ENCODE measurements at regions of chr13 and their contacts with region 1.

Region 1: DNA sequence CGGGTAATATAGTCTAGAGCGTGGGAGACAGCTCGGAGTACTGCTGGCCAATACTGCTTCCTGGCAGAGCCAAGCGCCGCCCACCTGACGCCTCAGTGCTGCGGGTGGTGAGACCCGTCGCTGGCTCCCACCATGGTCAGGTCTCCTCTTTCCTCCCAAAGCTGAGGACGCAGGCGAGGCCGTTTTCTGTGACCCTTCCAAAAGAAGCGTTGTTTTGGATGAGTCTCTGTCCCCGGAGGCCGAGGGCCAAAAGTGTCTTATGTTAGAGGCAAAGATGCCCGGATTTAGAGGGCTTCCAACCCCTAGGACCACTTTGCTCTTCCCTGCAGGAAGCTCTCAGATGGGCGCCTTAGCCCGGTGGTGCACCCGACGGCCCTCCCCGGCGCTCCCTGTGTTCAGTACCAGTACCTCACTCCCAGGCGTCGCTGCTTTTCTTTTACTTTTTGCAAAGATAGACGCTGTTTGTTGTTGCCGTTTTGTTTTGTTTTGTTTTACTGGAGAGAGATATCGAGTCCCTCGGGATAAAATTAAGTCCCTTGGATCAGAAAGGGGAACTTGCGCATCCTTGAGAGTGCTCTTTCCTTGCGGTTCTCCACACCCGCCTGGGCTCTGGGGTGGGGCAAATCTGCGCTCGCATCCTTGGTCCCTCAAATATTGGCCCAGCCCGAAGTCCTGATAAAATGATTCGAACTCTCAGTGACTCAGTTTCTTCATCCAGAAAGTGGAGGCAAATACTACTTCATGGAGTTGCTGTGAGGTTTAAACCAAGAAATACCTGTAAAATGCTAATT is 7.0 kb downstream of the PDX1 start:
- DNase-seq: peak; percentile 33
- ATAC-seq: no peak
- H3K4me3 Mint-ChIP-seq: peak overlapping the region; percentile 7
- H3K27ac Mint-ChIP-seq: no peak overlapping the region
- H3K4me1 Mint-ChIP-seq: peaks cover 22% of the 10 kb centered on the region
- H3K27me3 Mint-ChIP-seq: peaks cover 84% of the 10 kb centered on the region

Region 2: DNA sequence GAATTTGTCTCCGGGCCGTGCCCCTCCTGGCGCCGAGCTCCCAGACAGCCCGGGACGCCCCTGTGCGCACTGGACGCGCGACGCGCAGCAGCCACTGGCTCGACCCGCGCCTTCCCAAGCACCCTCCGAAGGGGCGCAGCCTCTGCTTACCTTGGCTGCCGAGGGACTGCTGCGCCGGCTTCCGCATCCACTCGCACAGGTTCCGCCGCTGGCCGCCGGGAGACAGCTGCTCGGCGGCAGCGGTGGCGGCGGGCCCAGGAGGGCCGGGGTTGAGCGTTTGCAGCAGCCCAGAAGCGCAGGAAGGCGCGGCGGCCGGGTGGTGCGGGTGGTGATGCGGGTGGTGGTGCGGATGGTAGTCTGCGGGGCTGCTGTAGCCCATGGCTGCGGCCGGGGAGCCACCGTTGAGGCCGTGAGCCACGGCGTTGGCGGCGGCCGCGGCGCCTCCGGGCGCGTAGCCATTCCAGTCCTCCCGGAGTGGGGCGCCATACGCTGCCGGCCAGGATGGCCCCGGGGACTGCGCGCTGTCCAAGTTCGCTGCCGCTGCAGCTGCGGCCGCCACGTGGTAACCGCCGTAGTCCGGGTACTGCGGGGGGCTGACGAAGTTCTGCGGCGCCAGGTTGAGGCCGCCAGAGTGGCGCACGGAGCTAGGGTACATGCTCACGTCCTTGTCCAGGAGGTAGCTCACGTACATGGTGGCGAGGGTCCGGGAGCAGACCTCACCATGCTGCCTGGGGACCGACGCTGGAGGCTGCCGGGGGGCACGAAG is 41.7 kb after region 1 on chr13:
- CTCF ChIA-PET with region 1: interaction called, 4 read pairs
- POLR2A ChIA-PET with region 1: no interaction called
- intact Hi-C with region 1: loop called (anchors 1 to 2 kb)
- DNase-seq: peak; percentile 38
- ATAC-seq: peak; percentile 12
- H3K4me3 Mint-ChIP-seq: no peak overlapping the region
- H3K27ac Mint-ChIP-seq: no peak overlapping the region
- H3K4me1 Mint-ChIP-seq: peaks cover 24% of the 10 kb centered on the region
- H3K27me3 Mint-ChIP-seq: peaks cover 73% of the 10 kb centered on the region

Region 3: DNA sequence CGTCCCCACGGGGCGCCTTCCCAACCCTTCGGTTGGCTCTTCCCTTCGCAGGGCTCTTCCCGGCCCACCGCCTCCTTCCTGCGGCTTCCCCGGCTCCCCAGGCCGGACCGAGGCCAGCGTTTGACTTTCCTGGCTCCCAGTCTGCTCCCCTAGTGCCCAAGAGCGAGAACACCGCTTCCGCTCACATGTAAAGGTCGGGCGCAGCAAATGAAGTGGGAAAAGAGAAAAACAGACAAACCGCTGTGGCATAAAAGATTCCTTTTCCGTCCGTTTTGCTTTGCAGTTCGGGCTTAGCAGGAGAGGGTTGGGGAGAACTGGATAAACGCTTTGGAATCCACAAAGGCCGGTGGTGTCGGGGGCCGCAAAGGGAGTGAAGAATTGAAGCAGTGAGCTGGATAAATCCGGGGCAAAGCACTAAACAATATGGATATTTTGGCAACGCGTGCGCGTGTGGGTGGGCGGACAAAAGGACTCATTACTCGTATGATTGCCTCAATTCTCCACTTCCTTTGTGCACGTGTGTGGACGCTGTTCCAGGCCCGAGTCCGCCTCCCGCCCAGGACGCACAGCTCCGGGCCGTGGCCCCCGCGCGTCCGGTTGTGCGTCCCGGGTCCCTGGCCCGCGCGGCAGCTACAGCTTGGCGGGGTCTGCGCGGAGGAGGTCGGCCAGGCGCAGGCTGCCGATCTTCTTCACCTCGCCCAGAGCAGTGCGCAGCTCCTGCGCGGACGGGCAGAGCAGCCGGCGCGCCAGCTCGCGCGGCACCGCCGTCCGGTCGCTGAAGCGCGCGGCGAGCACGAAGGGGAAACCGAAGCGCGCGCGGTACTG is 50.8 kb after region 1 on chr13:
- CTCF ChIA-PET with region 1: interaction called, 4 read pairs
- POLR2A ChIA-PET with region 1: interaction called, 7 read pairs
- intact Hi-C with region 1: loop called in 1 of 2 experiments (anchors 2 kb)
- DNase-seq: no peak
- ATAC-seq: no peak
- H3K4me3 Mint-ChIP-seq: no peak overlapping the region
- H3K27ac Mint-ChIP-seq: no peak overlapping the region
- H3K4me1 Mint-ChIP-seq: peaks cover 15% of the 10 kb centered on the region
- H3K27me3 Mint-ChIP-seq: peaks cover 79% of the 10 kb centered on the region

Measured in activated CD4-positive, alpha-beta T cell treated with anti-CD3 and anti-CD28 coated beads for 36 hours (primary cell).